WTC11 (cell line): ENCODE measurements at regions of chr11 and their contacts with region 1.

Region 1: GRCh38 chr11:119381181-119381988 is at the start of gene USP2:
- DNase-seq: peak; percentile 98
- ATAC-seq: peak; percentile 83
- H3K4me3 Mint-ChIP-seq: no peak within 1 kb of the TSS
- H3K27ac Mint-ChIP-seq: peak within 1 kb of the TSS; percentile 12; the same call in 1 of the 2 replicates
- H3K4me1 Mint-ChIP-seq: peaks cover 40% of the 10 kb centered on the region
- H3K27me3 Mint-ChIP-seq: peaks cover 20% of the 10 kb centered on the region
- CTCF ChIP-seq: peak; percentile 24; the same call in 1 of the 2 replicates
- total RNA-seq, gene USP2: 7.3 to 8.2 TPM (median 8.0 TPM) in 3 replicates

Region 2: GRCh38 chr11:119323538-119324033 is 57.8 kb before region 1 on chr11:
- CTCF ChIA-PET with region 1: interaction called, 55 read pairs
- POLR2A ChIA-PET with region 1: no interaction called
- DNase-seq: peak; percentile 90
- ATAC-seq: peak; percentile 5
- H3K4me3 Mint-ChIP-seq: no peak overlapping the region; the same call in 1 of the 2 replicates
- H3K27ac Mint-ChIP-seq: no peak overlapping the region
- H3K4me1 Mint-ChIP-seq: peaks cover 32% of the 10 kb centered on the region
- H3K27me3 Mint-ChIP-seq: peaks cover 3% of the 10 kb centered on the region; the same call in 1 of the 2 replicates
- CTCF ChIP-seq: peak; percentile 86

Region 3: GRCh38 chr11:119363851-119364590 is 17.4 kb before region 1 on chr11:
- CTCF ChIA-PET with region 1: interaction called, 95 read pairs
- POLR2A ChIA-PET with region 1: interaction called, 5 read pairs
- DNase-seq: peak; percentile 68
- ATAC-seq: peak; percentile 72
- H3K4me3 Mint-ChIP-seq: peak overlapping the region; percentile 69
- H3K27ac Mint-ChIP-seq: no peak overlapping the region
- H3K4me1 Mint-ChIP-seq: peaks cover 50% of the 10 kb centered on the region
- H3K27me3 Mint-ChIP-seq: peaks cover 49% of the 10 kb centered on the region
- CTCF ChIP-seq: no peak